ENCODE measurements at regions of chr2 and their contacts with region 1.

Region 1: GRCh38 chr2:27683390-27684071 is 19.8 kb downstream of the SLC4A1AP start:
- DNase-seq: peak; percentile 96
- H3K4me3 Mint-ChIP-seq: no peak overlapping the region
- H3K27ac Mint-ChIP-seq: peak overlapping the region; percentile 87
- H3K4me1 Mint-ChIP-seq: peaks cover 25% of the 10 kb centered on the region
- H3K27me3 Mint-ChIP-seq: no peaks in the 10 kb centered on the region

Region 2: GRCh38 chr2:27071990-27072828 is 611.3 kb before region 1 on chr2:
- CTCF ChIA-PET with region 1: no interaction called
- intact Hi-C with region 1: no loop called
- DNase-seq: peak; percentile 47
- H3K4me3 Mint-ChIP-seq: peak overlapping the region; percentile 81
- H3K27ac Mint-ChIP-seq: peak overlapping the region; percentile 87
- H3K4me1 Mint-ChIP-seq: peaks cover 75% of the 10 kb centered on the region
- H3K27me3 Mint-ChIP-seq: no peaks in the 10 kb centered on the region

Region 3: GRCh38 chr2:27322766-27323595 is 360.6 kb before region 1 on chr2 and contains the start of gene MPV17:
- CTCF ChIA-PET with region 1: interaction called, 4 read pairs
- intact Hi-C with region 1: loop called (anchors 1 kb)
- DNase-seq: peak; percentile 95
- H3K4me3 Mint-ChIP-seq: peak within 1 kb of the TSS; percentile 84
- H3K27ac Mint-ChIP-seq: peak within 1 kb of the TSS; percentile 85
- H3K4me1 Mint-ChIP-seq: peaks cover 14% of the 10 kb centered on the region
- H3K27me3 Mint-ChIP-seq: no peaks in the 10 kb centered on the region
- total RNA-seq, gene MPV17: 80.2 to 82.3 TPM

Region 4: GRCh38 chr2:27409321-27410073 is 274.0 kb before region 1 on chr2 and contains the start of gene PPM1G:
- CTCF ChIA-PET with region 1: interaction called, 6 read pairs
- intact Hi-C with region 1: loop called (anchors 1 kb)
- DNase-seq: peak; percentile 97
- H3K4me3 Mint-ChIP-seq: peak within 1 kb of the TSS; percentile 89
- H3K27ac Mint-ChIP-seq: peak within 1 kb of the TSS; percentile 87
- H3K4me1 Mint-ChIP-seq: peaks cover 32% of the 10 kb centered on the region
- H3K27me3 Mint-ChIP-seq: no peaks in the 10 kb centered on the region
- total RNA-seq, gene PPM1G: 92.3 to 101 TPM

Region 5: GRCh38 chr2:27489498-27490397 is 193.8 kb before region 1 on chr2 and contains the start of gene IFT172:
- CTCF ChIA-PET with region 1: interaction called, 6 read pairs
- intact Hi-C with region 1: loop called (anchors 1 kb)
- DNase-seq: peak; percentile 100
- H3K4me3 Mint-ChIP-seq: peak within 1 kb of the TSS; percentile 87
- H3K27ac Mint-ChIP-seq: peak within 1 kb of the TSS; percentile 66
- H3K4me1 Mint-ChIP-seq: peaks cover 20% of the 10 kb centered on the region
- H3K27me3 Mint-ChIP-seq: peaks cover 10% of the 10 kb centered on the region
- total RNA-seq, gene IFT172: 9.2 to 12.7 TPM

Region 6: GRCh38 chr2:27638037-27638637 is 45.4 kb before region 1 on chr2:
- CTCF ChIA-PET with region 1: interaction called, 7 read pairs
- intact Hi-C with region 1: loop called (anchors 1 kb)
- DNase-seq: peak; percentile 17
- H3K4me3 Mint-ChIP-seq: peak overlapping the region; percentile 28
- H3K27ac Mint-ChIP-seq: peak overlapping the region; percentile 92
- H3K4me1 Mint-ChIP-seq: peaks cover 20% of the 10 kb centered on the region
- H3K27me3 Mint-ChIP-seq: no peaks in the 10 kb centered on the region

Region 7: DNA sequence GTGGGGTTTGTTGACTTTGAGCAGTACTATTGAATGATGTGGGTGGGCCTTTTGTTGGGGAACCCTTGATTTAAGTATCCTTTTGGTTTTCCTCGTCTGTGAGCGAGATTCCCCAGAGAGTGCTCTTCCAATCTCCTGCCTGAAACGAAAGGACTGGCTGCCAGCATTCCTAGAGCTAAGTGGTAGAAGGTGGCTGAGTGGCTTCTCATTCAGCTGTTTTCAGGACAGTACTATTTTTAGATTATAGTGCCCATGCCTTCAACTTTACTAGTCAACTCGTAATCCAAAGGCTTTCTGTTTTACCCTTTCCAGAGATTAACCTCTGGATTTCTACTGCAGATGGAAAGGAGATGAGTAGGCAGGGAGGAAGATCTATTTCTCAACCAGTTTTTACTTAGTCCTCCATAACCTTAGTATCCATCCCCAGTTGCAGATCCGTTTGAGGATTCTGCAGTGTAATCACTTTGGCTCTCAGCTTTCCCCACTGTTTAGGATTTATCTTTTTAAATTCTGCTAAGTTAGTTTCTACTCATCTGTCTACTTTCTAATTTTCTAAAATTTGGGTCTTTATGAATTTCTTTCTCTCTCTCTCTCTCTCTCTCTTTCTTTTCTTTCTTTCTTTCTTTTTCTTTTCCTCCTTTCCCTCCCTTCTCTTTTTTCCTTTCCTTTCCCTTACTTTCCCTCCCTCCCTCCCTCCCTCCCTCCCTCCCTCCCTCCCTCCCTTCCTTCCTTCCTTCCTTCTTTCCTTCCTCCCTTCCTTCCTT is 10.6 kb before region 1 on chr2:
- CTCF ChIA-PET with region 1: interaction called, 18 read pairs
- intact Hi-C with region 1: no loop called
- DNase-seq: no peak
- H3K4me3 Mint-ChIP-seq: no peak overlapping the region
- H3K27ac Mint-ChIP-seq: no peak overlapping the region
- H3K4me1 Mint-ChIP-seq: peaks cover 8% of the 10 kb centered on the region
- H3K27me3 Mint-ChIP-seq: no peaks in the 10 kb centered on the region